ENCODE measurements at regions of chr10 and their contacts with region 1.

Region 1: GRCh38 chr10:77926566-77927401 is at the start of gene DLG5:
- DNase-seq: peak; percentile 18
- H3K4me3 Mint-ChIP-seq: peak within 1 kb of the TSS; percentile 76
- H3K27ac Mint-ChIP-seq: no peak within 1 kb of the TSS
- H3K4me1 Mint-ChIP-seq: peaks cover 17% of the 10 kb centered on the region
- H3K27me3 Mint-ChIP-seq: peaks cover 41% of the 10 kb centered on the region
- total RNA-seq, gene DLG5: 4.0 and 4.1 TPM in 2 replicates

Region 2: GRCh38 chr10:77685432-77685831 is 241.4 kb before region 1 on chr10:
- intact Hi-C with region 1: no loop called
- DNase-seq: no peak
- H3K4me3 Mint-ChIP-seq: no peak overlapping the region
- H3K27ac Mint-ChIP-seq: no peak overlapping the region
- H3K4me1 Mint-ChIP-seq: no peaks in the 10 kb centered on the region
- H3K27me3 Mint-ChIP-seq: peaks cover 6% of the 10 kb centered on the region

Region 3: DNA sequence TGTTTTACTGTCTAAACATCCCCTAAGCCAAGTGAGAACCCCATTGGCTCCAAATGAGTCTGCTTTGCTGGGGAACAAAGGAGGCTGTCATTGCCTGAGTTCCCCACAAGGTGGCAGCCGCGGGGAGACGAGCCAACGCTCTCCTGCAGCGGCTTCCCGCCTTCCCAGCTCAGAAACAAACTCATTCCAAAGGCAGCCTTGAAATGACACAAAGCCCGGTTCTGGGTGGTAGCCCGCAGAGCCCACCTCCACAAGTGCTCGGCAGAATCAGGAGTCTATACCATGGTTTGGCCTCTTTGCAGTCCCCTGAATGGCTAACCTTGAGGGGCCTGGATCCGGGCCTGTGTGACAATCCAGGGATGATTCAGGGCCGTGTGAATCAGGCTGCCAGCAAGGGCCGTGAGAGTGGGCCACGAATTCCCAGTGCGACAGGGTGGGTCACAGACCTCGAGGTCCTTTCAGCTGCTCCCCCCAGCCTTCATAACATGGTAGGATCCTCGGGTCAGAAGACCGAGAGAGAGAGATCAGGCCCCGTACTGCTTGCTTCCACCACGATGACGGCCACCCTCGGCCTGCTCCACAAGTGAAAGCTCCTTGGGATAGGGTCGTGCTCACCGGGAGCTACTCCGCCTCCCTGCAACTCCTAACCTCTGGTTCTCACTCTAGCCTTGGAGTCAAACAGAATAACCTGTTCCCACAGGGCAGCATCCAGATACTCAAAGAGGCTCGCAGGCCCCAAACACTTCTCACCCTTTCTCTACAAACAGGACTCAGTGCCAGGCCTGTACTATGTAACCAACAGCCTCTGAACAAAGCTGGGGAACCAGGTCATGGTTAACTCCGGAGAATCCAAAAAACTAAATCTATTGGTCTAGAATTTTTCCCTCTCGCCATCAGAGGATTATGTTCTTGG is 79.8 kb before region 1 on chr10:
- intact Hi-C with region 1: loop called (anchors 1 kb)
- DNase-seq: peak; percentile 37
- H3K4me3 Mint-ChIP-seq: no peak overlapping the region
- H3K27ac Mint-ChIP-seq: no peak overlapping the region
- H3K4me1 Mint-ChIP-seq: peaks cover 5% of the 10 kb centered on the region
- H3K27me3 Mint-ChIP-seq: no peaks in the 10 kb centered on the region

Region 4: GRCh38 chr10:77970869-77971803 is 44.4 kb after region 1 on chr10:
- intact Hi-C with region 1: loop called (anchors 5 kb)
- DNase-seq: no peak
- H3K4me3 Mint-ChIP-seq: no peak overlapping the region
- H3K27ac Mint-ChIP-seq: peak overlapping the region; percentile 52
- H3K4me1 Mint-ChIP-seq: peaks cover 10% of the 10 kb centered on the region
- H3K27me3 Mint-ChIP-seq: no peaks in the 10 kb centered on the region

Region 5: GRCh38 chr10:78029269-78030226 is 102.8 kb after region 1 on chr10 and contains the start of gene POLR3A:
- intact Hi-C with region 1: loop called (anchors 5 kb)
- DNase-seq: peak; percentile 89
- H3K4me3 Mint-ChIP-seq: peak within 1 kb of the TSS; percentile 99
- H3K27ac Mint-ChIP-seq: peak within 1 kb of the TSS; percentile 91
- H3K4me1 Mint-ChIP-seq: peaks cover 28% of the 10 kb centered on the region
- H3K27me3 Mint-ChIP-seq: no peaks in the 10 kb centered on the region
- total RNA-seq, gene POLR3A: 29.5 and 30.8 TPM in 2 replicates

Measured in activated T-helper 1 cell treated with anti-CD3 and anti-CD28 coated beads, Interleukin-12 subunit alpha, Interleukin-12 subunit beta, Interleukin-2, Interleukin-4 antibody, amounts not matched to agents 30 ng/mL and 10 ng/mL and 1 ng/mL, durations not matched to agents 14 hours and 24 hours and 36 hours (primary cell).